Dorsolateral prefrontal cortex (tissue), 120 donors: ENCODE measurements at regions of chr7 and their contacts with region 1.

Region 1: GRCh38 chr7:100132697-100133151 is 6.0 kb downstream of the MBLAC1 start:
- DNase-seq: peak in 5 of 10 donors; percentile 26 to 59 (median 38)
- H3K4me3 ChIP-seq: peak overlapping the region in 1 of 59 donors; percentile 6
- H3K27ac ChIP-seq: peak overlapping the region in 3 of 59 donors; percentile 15 to 31 (median 16)
- H3K27me3 ChIP-seq: no peaks in the 10 kb centered on the region
- CTCF ChIP-seq: peak; percentile 21 to 80 (median 67)

Region 2: GRCh38 chr7:99860281-99861127 is 272.2 kb before region 1 on chr7:
- intact Hi-C with region 1: no loop called
- DNase-seq: no peak
- H3K4me3 ChIP-seq: no peak overlapping the region
- H3K27ac ChIP-seq: no peak overlapping the region
- H3K27me3 ChIP-seq: no peaks in the 10 kb centered on the region
- CTCF ChIP-seq: no peak

Region 3: DNA sequence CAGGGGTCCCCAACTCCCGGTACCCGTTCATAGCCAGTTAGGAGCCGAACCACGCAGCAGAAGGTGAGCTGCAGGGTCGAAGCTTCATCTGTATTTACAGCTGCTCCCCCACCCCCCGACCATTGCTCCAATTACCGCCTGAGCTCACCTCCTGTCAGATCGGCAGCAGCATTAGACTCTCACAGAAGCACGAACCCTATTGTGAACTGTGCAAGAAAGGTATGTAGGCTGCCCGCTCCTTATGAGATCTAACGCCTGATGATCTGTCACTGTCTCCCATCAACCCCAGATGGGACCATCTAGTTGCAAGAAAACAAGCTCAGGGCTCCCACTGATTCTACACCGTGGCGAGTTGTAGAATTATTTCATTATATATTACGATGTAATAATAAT is 142.3 kb before region 1 on chr7:
- intact Hi-C with region 1: loop called in 1 of 2 experiments (anchors 5 kb)
- DNase-seq: peak in 1 of 10 donors; percentile 35
- H3K4me3 ChIP-seq: peak overlapping the region in 58 of 59 donors; percentile 19 to 69 (median 53)
- H3K27ac ChIP-seq: peak overlapping the region in 30 of 59 donors; percentile 2 to 82 (median 60)
- H3K27me3 ChIP-seq: no peaks in the 10 kb centered on the region
- CTCF ChIP-seq: no peak

Region 4: DNA sequence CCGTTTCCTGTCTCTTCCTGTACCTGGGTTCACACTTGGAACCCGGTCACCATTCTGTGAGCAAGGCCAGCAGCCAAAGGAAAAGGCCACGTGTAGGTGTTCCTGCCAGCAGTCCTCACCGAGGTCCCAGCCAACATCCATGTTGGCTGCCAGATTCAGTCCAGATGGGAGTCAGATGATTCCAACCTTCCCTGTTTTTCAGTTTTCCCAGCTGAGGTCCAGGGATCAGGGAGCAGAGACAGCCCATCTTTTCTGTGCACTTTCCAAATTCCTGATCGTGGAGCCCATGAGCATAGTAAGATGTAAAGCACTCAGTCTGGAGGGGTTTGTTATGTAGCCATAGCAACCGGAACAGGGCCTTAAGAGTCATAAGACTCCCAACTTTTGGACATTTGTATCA is 83.2 kb after region 1 on chr7:
- intact Hi-C with region 1: loop called (anchors 5 kb)
- DNase-seq: peak in 3 of 10 donors; percentile 26 to 86 (median 34)
- H3K4me3 ChIP-seq: no peak overlapping the region
- H3K27ac ChIP-seq: peak overlapping the region in 33 of 59 donors; percentile 5 to 70 (median 39)
- H3K27me3 ChIP-seq: no peaks in the 10 kb centered on the region
- CTCF ChIP-seq: peak in 1 of 56 donors; percentile 13

Region 5: GRCh38 chr7:100221231-100221718 is 88.6 kb after region 1 on chr7:
- intact Hi-C with region 1: loop called (anchors 5 kb)
- DNase-seq: no peak
- H3K4me3 ChIP-seq: no peak overlapping the region
- H3K27ac ChIP-seq: peak overlapping the region in 14 of 59 donors; percentile 1 to 45 (median 20)
- H3K27me3 ChIP-seq: no peaks in the 10 kb centered on the region
- CTCF ChIP-seq: no peak